AG04449 (cell line): ENCODE measurements at regions of chr6 and their contacts with region 1.

Region 1: DNA sequence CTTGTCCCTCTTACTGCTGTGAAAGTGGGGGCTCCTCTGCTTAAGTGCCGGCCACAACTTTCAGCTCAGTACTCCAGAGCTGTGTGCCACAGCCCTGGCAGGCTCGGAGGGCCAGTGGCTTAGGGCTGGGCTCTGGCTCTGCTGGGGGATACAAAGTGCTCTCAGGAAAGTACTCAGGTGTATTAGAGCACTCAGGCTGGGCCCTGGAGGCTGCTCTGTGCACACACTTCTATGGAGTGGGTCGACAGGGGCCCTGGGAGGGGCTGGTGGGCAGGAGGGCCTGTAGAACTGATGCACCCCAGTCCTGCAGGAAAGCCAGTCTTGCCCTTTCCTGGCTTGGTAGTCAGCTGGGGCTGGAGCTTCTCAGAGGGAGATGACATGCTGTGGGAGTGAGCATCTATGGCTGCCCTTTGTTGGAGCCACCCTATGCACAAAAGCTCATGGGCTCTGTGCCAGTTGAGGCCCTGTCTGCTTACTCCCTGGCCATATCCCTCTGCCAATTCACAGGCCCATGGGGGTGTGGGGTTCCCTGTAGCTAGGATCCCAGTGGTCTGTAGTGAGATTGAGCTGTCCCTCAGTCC is 22.0 kb downstream of the CENPW start:
- DNase-seq: no peak
- H3K4me3 ChIP-seq: no peak overlapping the region
- CTCF ChIP-seq: no peak

Region 2: DNA sequence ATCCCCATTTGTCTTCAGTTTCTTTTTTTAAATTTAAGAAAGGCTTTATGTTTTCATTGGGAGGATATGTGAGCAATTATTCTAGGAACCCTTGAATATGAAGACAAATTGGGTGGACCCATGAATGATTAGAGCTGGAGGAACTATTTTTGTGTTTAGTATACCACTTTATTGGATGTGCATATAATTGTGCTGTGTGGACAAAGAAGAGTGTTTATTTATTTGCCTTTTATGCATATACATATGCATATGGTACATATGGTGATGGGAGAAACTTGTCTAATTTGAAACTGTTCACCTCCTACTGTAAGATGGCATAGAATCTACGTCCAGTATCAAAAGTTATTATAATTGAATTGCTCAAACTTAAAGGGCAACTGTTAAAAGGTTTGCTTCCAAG is 116.8 kb before region 1 on chr6:
- CTCF ChIA-PET with region 1: no interaction called
- POLR2A ChIA-PET with region 1: no interaction called
- DNase-seq: no peak
- H3K4me3 ChIP-seq: no peak overlapping the region
- CTCF ChIP-seq: no peak

Region 3: DNA sequence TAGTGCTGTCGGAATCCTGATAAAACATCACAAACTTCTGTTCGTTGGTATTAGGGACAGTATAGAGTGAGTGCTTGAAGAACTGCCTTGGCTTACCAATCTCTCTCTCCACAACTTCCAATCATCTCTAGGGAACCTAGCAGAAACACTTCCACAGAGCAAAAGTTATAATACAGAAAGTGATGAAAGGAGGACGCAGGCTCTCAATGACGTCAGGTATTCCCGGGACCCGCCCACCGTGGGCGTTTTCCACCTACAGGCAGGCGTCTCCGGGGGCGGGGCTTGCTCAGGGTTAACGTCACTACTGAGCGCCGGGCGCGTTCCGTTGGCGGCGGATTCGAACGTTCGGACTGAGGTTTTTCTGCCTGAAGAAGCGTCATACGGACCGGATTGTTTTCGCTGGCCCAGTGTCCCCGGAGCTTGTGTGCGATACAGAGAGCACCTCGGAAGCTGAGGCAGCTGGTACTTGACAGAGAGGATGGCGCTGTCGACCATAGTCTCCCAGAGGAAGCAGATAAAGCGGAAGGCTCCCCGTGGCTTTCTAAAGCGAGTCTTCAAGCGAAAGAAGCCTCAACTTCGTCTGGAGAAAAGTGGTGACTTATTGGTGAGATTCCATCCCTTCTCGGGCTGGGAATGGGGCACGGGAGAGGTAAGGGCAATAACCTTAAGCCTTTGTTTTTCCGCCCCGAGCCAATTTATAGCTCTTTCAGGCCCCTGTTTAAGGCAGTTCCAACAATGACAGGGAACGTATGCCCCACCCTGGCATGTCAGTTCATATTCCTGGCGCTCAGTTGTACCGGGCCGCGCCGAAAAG is 21.9 kb before region 1 on chr6 and contains the start of gene CENPW:
- CTCF ChIA-PET with region 1: interaction called, 21 read pairs
- POLR2A ChIA-PET with region 1: no interaction called
- DNase-seq: peak; percentile 7
- H3K4me3 ChIP-seq: peak within 1 kb of the TSS; percentile 90
- CTCF ChIP-seq: no peak

Region 4: DNA sequence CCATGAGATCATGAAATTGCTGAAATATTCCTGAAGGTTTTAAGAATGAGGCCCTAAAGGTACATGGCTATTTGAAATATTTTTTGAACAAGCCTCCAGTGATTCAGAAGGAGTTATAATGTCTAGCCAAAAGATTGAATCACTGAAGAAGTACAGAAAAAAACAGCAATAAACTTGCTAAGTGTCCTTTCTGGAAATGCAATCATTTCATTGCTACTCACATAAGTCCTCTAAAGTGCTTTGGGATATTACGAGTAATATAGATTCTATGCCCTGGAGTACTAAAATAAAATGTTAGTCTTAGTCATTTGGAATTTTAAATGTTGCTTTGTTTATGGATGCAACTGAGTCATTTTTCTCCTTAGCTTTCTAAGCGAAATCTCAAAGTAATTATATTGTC is 10.7 kb after region 1 on chr6:
- CTCF ChIA-PET with region 1: interaction called, 35 read pairs
- POLR2A ChIA-PET with region 1: no interaction called
- DNase-seq: no peak
- H3K4me3 ChIP-seq: no peak overlapping the region
- CTCF ChIP-seq: no peak

Region 5: DNA sequence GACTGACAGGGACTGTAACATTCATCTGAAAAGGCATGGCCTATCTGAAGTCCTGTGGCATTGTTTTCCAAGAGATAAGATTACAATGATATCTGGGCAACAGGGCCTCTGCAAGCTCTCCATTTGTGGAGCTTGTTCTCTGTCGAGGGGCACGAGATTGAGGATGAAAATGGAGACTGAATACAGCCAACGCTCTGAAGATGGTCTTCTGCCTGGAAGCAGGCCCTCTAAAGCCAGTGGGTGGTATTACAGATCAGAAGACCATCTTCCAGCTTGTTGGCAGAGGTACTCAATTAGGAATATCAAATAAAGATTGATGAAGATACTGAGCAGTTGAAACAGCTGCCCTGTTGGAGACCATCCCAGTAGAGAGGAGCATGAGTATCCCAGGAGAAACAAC is 266.2 kb after region 1 on chr6:
- CTCF ChIA-PET with region 1: no interaction called
- POLR2A ChIA-PET with region 1: no interaction called
- DNase-seq: no peak
- H3K4me3 ChIP-seq: no peak overlapping the region
- CTCF ChIP-seq: no peak

Region 6: DNA sequence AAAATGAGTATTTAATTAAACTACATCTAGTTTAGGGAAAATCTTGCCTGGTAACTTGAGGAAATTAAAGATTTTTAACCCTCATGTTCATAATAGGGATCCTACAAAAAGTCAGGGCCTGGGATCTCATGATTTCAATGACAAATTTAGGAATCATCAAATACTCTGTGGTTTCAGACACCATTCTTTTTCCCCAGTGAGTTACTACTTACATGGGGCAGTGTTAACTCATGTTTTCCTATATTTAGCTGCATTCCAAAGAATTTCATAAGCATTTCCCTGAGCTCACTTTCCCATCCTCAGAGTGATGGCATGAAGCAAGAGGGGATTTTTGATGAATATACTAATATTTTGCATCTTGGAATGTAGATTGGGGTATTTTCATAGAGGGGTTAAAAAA is 299.7 kb after region 1 on chr6:
- CTCF ChIA-PET with region 1: interaction called, 10 read pairs
- POLR2A ChIA-PET with region 1: no interaction called
- DNase-seq: peak; percentile 86
- H3K4me3 ChIP-seq: no peak overlapping the region
- CTCF ChIP-seq: no peak